ENCODE measurements at regions of chr3 and their contacts with region 1.

Region 1: GRCh38 chr3:16884084-16884747 is 539 bp upstream of the PLCL2 start:
- DNase-seq: peak; percentile 59 to 85 (median 68)
- ATAC-seq: peak; percentile 32
- H3K4me3 ChIP-seq: peak overlapping the region; percentile 93
- H3K4me3 Mint-ChIP-seq: peak overlapping the region; percentile 100
- H3K27ac ChIP-seq: peak overlapping the region; percentile 49 to 91
- H3K27ac Mint-ChIP-seq: peak overlapping the region; percentile 98
- H3K4me1 ChIP-seq: peaks cover 15% of the 10 kb centered on the region
- H3K4me1 Mint-ChIP-seq: peaks cover 46% of the 10 kb centered on the region
- H3K27me3 ChIP-seq: no peaks in the 10 kb centered on the region
- H3K27me3 Mint-ChIP-seq: no peaks in the 10 kb centered on the region
- CTCF ChIP-seq: peak; percentile 71

Region 2: DNA sequence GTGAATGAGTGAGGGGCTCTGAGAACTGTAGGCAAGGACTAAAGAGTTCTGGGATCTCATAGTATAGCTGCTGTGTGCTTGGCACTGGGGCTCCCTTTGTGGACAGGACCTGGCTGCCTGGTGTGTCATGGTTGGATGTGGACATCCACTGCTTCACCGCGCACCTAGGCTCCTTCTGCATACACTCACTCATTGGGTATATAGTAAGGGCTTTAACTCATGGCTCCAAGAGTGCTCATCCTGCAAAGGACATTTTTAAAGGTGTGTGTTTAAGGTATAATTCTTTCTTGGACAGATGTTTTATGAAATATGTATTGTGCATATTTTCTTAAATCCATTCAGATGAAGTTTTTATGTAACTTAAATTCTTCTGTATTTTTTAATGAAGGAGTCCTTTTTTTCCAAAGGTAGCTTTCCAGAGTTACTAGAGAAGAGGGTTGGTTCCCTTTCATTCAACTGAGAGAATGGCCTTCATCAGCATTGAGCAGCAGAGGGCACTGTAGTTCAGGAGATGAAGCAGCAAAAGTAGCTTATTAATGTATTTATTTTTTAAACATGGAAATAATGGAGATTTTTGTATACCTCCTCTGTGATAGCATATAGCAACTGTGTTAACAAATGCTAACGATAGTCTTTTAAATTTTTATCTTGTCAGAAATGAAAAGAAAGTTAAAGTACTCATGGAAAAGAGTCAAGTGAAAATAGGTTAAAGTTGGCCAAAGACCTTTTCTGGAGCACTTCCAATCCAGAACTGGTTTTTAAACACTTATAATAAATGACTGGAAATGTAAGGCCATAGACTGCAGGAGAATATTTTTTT is 594.0 kb before region 1 on chr3:
- CTCF ChIA-PET with region 1: no interaction called
- POLR2A ChIA-PET with region 1: interaction called, 3 read pairs
- intact Hi-C with region 1: loop called in 1 of 2 experiments (anchors 10 kb)
- DNase-seq: peak in 11 of 14 experiments; percentile 35 to 80 (median 58)
- ATAC-seq: peak; percentile 12
- H3K4me3 ChIP-seq: peak overlapping the region; percentile 91
- H3K4me3 Mint-ChIP-seq: peak overlapping the region; percentile 95
- H3K27ac ChIP-seq: peak overlapping the region; percentile 65 to 88
- H3K27ac Mint-ChIP-seq: peak overlapping the region; percentile 92
- H3K4me1 ChIP-seq: peaks cover 46% of the 10 kb centered on the region
- H3K4me1 Mint-ChIP-seq: peaks cover 73% of the 10 kb centered on the region
- H3K27me3 ChIP-seq: no peaks in the 10 kb centered on the region
- H3K27me3 Mint-ChIP-seq: no peaks in the 10 kb centered on the region
- CTCF ChIP-seq: peak; percentile 97

Region 3: GRCh38 chr3:16795581-16795980 is 88.6 kb before region 1 on chr3:
- CTCF ChIA-PET with region 1: no interaction called
- POLR2A ChIA-PET with region 1: no interaction called
- intact Hi-C with region 1: no loop called
- DNase-seq: no peak
- ATAC-seq: no peak
- H3K4me3 ChIP-seq: no peak overlapping the region
- H3K4me3 Mint-ChIP-seq: no peak overlapping the region
- H3K27ac ChIP-seq: no peak overlapping the region
- H3K27ac Mint-ChIP-seq: no peak overlapping the region
- H3K4me1 ChIP-seq: peaks cover 6% of the 10 kb centered on the region
- H3K4me1 Mint-ChIP-seq: peaks cover 19% of the 10 kb centered on the region
- H3K27me3 ChIP-seq: no peaks in the 10 kb centered on the region
- H3K27me3 Mint-ChIP-seq: no peaks in the 10 kb centered on the region
- CTCF ChIP-seq: no peak

Region 4: DNA sequence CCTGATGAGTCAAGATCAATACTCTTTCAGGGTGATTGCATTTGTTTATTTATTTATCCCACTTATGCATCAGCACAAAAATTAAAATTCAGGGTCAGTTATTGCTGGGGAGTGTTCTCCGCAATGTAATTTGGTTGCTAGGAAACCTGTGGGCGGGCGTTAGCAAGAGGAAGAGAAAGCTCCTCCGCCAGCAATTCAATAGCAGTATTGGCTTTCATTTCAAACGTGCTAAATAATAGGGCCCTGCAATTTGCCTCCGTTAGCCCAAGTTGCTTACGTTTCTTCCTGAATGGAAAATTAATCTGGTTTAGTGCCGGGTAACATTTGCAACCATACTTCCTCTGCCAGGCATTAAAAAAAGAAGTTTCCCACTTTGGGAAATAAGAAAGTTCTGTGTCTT is 35.0 kb before region 1 on chr3:
- CTCF ChIA-PET with region 1: interaction called, 3 read pairs
- POLR2A ChIA-PET with region 1: interaction called, 137 read pairs
- intact Hi-C with region 1: loop called in 1 of 2 experiments (anchors 2 kb)
- DNase-seq: peak; percentile 44 to 89 (median 62)
- ATAC-seq: peak; percentile 96
- H3K4me3 ChIP-seq: peak overlapping the region; percentile 36
- H3K4me3 Mint-ChIP-seq: peak overlapping the region; percentile 78
- H3K27ac ChIP-seq: peak overlapping the region in 1 of 2 donors; percentile 35
- H3K27ac Mint-ChIP-seq: peak overlapping the region; percentile 67
- H3K4me1 ChIP-seq: peaks cover 53% of the 10 kb centered on the region
- H3K4me1 Mint-ChIP-seq: peaks cover 51% of the 10 kb centered on the region
- H3K27me3 ChIP-seq: no peaks in the 10 kb centered on the region
- H3K27me3 Mint-ChIP-seq: no peaks in the 10 kb centered on the region
- CTCF ChIP-seq: no peak

Region 5: GRCh38 chr3:16897254-16897926 is 13.2 kb after region 1 on chr3:
- CTCF ChIA-PET with region 1: interaction called, 17 read pairs
- POLR2A ChIA-PET with region 1: interaction called, 31 read pairs
- intact Hi-C with region 1: loop called in 1 of 2 experiments (anchors 2 kb)
- DNase-seq: peak in 8 of 14 experiments; percentile 18 to 54 (median 40)
- ATAC-seq: peak; percentile 73
- H3K4me3 ChIP-seq: no peak overlapping the region
- H3K4me3 Mint-ChIP-seq: peak overlapping the region; percentile 7
- H3K27ac ChIP-seq: no peak overlapping the region
- H3K27ac Mint-ChIP-seq: peak overlapping the region; percentile 91
- H3K4me1 ChIP-seq: peaks cover 68% of the 10 kb centered on the region
- H3K4me1 Mint-ChIP-seq: peaks cover 88% of the 10 kb centered on the region
- H3K27me3 ChIP-seq: no peaks in the 10 kb centered on the region
- H3K27me3 Mint-ChIP-seq: no peaks in the 10 kb centered on the region
- CTCF ChIP-seq: no peak

Region 6: GRCh38 chr3:16936233-16936632 is 52.0 kb after region 1 on chr3:
- CTCF ChIA-PET with region 1: interaction called, 3 read pairs
- POLR2A ChIA-PET with region 1: interaction called, 4 read pairs
- intact Hi-C with region 1: loop called in 1 of 2 experiments (anchors 5 kb)
- DNase-seq: peak in 5 of 14 experiments; percentile 9 to 51 (median 37)
- ATAC-seq: peak; percentile 84
- H3K4me3 ChIP-seq: no peak overlapping the region
- H3K4me3 Mint-ChIP-seq: peak overlapping the region; percentile 85
- H3K27ac ChIP-seq: no peak overlapping the region
- H3K27ac Mint-ChIP-seq: peak overlapping the region; percentile 60
- H3K4me1 ChIP-seq: peaks cover 46% of the 10 kb centered on the region
- H3K4me1 Mint-ChIP-seq: peaks cover 97% of the 10 kb centered on the region
- H3K27me3 ChIP-seq: no peaks in the 10 kb centered on the region
- H3K27me3 Mint-ChIP-seq: no peaks in the 10 kb centered on the region
- CTCF ChIP-seq: no peak

Region 7: GRCh38 chr3:16975083-16975482 is 90.9 kb after region 1 on chr3:
- CTCF ChIA-PET with region 1: no interaction called
- POLR2A ChIA-PET with region 1: no interaction called
- intact Hi-C with region 1: no loop called
- DNase-seq: no peak
- ATAC-seq: no peak
- H3K4me3 ChIP-seq: no peak overlapping the region
- H3K4me3 Mint-ChIP-seq: no peak overlapping the region
- H3K27ac ChIP-seq: no peak overlapping the region
- H3K27ac Mint-ChIP-seq: peak overlapping the region; percentile 15
- H3K4me1 ChIP-seq: peaks cover 13% of the 10 kb centered on the region
- H3K4me1 Mint-ChIP-seq: peaks cover 70% of the 10 kb centered on the region
- H3K27me3 ChIP-seq: no peaks in the 10 kb centered on the region
- H3K27me3 Mint-ChIP-seq: no peaks in the 10 kb centered on the region
- CTCF ChIP-seq: no peak

Region 8: DNA sequence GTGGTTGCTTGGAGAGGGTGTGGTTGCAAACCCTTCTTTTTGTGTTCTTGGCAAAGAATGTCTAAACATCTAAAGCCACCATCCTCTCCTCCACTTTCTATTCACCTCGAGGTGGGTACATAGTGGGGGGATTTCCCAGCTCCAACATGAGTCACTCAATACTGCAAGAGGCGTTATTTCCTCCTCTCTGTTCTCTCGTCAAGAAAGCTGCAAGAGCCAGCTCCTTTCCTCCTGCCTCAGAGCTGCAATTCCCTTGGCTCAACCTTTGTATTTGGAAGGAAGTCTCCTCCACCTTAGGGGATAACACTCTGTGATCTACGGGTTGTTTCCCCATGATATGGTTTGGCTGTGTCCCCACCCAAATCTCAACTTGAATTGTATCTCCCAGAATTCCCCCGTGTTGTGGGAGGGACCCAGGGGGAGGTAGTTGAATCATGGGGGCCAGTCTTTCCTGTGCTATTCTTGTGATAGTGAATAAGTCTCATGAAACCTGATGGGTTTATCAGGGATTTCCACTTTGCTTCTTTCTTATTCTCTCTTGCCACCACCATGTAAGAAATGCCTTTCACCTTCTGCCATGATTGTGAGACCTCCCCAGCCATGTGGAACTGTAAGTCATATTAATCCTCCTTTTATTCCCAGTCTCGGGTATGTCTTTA is 138.9 kb after region 1 on chr3:
- CTCF ChIA-PET with region 1: interaction called, 3 read pairs
- POLR2A ChIA-PET with region 1: interaction called, 3 read pairs
- intact Hi-C with region 1: loop called in 1 of 2 experiments (anchors 5 kb)
- DNase-seq: peak in 10 of 14 experiments; percentile 3 to 79 (median 22)
- ATAC-seq: peak; percentile 90
- H3K4me3 ChIP-seq: no peak overlapping the region
- H3K4me3 Mint-ChIP-seq: no peak overlapping the region
- H3K27ac ChIP-seq: no peak overlapping the region
- H3K27ac Mint-ChIP-seq: peak overlapping the region; percentile 82
- H3K4me1 ChIP-seq: peaks cover 11% of the 10 kb centered on the region
- H3K4me1 Mint-ChIP-seq: peaks cover 79% of the 10 kb centered on the region
- H3K27me3 ChIP-seq: no peaks in the 10 kb centered on the region
- H3K27me3 Mint-ChIP-seq: no peaks in the 10 kb centered on the region
- CTCF ChIP-seq: no peak

Region 9: DNA sequence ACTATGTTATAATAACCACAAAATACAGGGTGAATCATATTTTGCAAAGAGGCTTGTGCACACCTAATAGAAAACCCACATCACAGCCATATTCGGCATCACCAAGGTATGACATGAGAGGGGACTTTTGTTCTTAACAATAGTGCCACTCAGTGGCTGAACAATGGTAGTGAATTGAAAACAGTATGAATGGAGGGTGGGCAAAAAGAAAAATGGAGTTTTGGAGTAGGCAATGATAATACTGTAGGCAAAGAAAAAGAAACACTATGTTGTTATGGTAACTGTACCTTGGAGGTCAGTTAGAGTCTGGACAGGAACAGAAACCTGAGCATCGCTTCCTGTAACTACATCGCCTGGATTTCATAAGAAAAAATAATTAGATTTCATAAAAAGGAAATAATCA is 349.2 kb after region 1 on chr3:
- CTCF ChIA-PET with region 1: interaction called, 6 read pairs
- POLR2A ChIA-PET with region 1: interaction called, 3 read pairs
- intact Hi-C with region 1: loop called in 1 of 2 experiments (anchors 1 kb)
- DNase-seq: peak in 10 of 14 experiments; percentile 1 to 79 (median 24)
- ATAC-seq: peak; percentile 100
- H3K4me3 ChIP-seq: no peak overlapping the region
- H3K4me3 Mint-ChIP-seq: peak overlapping the region; percentile 2
- H3K27ac ChIP-seq: no peak overlapping the region
- H3K27ac Mint-ChIP-seq: peak overlapping the region; percentile 25
- H3K4me1 ChIP-seq: no peaks in the 10 kb centered on the region
- H3K4me1 Mint-ChIP-seq: peaks cover 30% of the 10 kb centered on the region
- H3K27me3 ChIP-seq: no peaks in the 10 kb centered on the region
- H3K27me3 Mint-ChIP-seq: no peaks in the 10 kb centered on the region
- CTCF ChIP-seq: peak; percentile 82

Region 10: DNA sequence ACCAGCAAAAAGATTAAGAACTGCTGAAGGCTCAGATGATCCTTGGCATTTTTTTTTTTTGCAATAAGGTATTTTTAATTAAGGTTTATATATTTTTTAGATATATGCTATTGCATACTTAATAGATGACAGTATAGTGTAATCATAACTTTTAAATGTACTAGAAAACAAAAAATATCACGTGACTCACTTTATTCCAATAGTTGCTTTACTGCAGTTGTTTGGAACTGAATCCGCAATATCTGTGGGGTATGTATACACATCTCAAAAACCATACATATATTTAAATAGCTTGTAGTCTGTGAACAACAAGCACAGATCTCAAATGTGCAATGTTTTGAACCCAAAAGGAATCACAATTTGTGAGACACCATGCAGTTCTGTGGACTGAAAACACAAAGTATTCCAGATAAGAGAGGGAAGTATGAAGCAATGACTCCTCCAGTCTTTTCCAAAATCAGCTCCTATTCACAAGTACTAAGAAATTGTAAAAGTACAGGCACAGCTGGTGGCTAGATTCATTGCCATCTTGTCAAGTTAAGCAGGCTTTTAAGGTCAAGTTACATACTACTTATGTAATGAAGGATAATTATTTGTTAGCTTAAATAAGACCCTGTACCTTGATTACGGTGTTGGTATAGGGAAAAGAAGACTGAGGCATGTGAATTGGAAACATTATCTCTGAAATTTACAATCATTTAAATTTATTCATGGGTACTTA is 527.1 kb after region 1 on chr3:
- CTCF ChIA-PET with region 1: no interaction called
- POLR2A ChIA-PET with region 1: no interaction called
- intact Hi-C with region 1: no loop called
- DNase-seq: no peak
- ATAC-seq: no peak
- H3K4me3 ChIP-seq: no peak overlapping the region
- H3K4me3 Mint-ChIP-seq: no peak overlapping the region
- H3K27ac ChIP-seq: no peak overlapping the region
- H3K27ac Mint-ChIP-seq: no peak overlapping the region
- H3K4me1 ChIP-seq: no peaks in the 10 kb centered on the region
- H3K4me1 Mint-ChIP-seq: no peaks in the 10 kb centered on the region
- H3K27me3 ChIP-seq: no peaks in the 10 kb centered on the region
- H3K27me3 Mint-ChIP-seq: no peaks in the 10 kb centered on the region
- CTCF ChIP-seq: no peak

Region 11: GRCh38 chr3:18672561-18672960 is 1788.3 kb after region 1 on chr3:
- CTCF ChIA-PET with region 1: no interaction called
- POLR2A ChIA-PET with region 1: no interaction called
- intact Hi-C with region 1: no loop called
- DNase-seq: no peak
- ATAC-seq: no peak
- H3K4me3 ChIP-seq: no peak overlapping the region
- H3K4me3 Mint-ChIP-seq: peak overlapping the region; percentile 2
- H3K27ac ChIP-seq: no peak overlapping the region
- H3K27ac Mint-ChIP-seq: no peak overlapping the region
- H3K4me1 ChIP-seq: peaks cover under 1% of the 10 kb centered on the region
- H3K4me1 Mint-ChIP-seq: peaks cover 44% of the 10 kb centered on the region
- H3K27me3 ChIP-seq: no peaks in the 10 kb centered on the region
- H3K27me3 Mint-ChIP-seq: no peaks in the 10 kb centered on the region
- CTCF ChIP-seq: no peak

Measured in CD4-positive, alpha-beta T cell (primary cell).